ENCODE measurements at regions of chr5 and their contacts with region 1.

Region 1: DNA sequence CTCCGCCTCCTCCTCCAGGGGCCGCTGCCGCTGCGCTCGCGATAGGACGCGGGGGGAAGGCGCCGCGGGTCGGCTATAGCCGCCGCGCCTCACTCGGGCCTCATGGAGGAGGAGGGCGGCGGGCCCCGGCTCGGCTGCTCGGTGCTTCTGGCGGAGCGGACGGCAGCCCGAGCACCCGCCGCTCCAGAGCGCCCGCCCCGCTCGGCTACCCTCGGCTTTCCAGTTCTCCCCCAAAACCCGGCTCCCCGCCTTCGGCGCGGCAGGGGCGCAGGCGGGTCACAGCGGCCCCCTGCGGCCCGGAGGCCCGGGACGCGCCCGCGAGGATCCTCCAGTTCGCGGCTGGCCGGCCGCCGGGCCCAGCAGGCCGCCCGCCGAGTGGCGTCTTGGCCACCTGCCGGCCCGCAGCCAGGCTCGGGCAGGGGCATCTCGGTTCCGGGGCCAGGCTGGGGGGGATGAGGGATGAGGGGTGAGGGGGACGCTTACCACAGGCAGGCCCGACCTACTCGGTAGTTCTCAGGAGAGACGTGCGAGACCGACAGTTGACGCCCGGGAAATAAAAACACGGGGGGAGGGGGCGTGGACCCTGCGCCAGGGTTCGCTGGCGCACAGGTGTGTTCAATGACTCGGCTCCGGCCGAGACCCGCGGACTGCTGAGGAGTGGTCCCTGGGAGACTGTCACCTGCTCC is at the start of gene PAIP1:
- DNase-seq: peak; percentile 83
- ATAC-seq: peak; percentile 87
- H3K4me3 Mint-ChIP-seq: peak within 1 kb of the TSS; percentile 87
- H3K27ac Mint-ChIP-seq: peak within 1 kb of the TSS; percentile 93
- H3K4me1 Mint-ChIP-seq: peaks cover 17% of the 10 kb centered on the region
- H3K27me3 Mint-ChIP-seq: peaks cover 1% of the 10 kb centered on the region
- CTCF ChIP-seq: peak; percentile 69
- total RNA-seq, gene PAIP1: 43.6 to 44.6 TPM

Region 2: GRCh38 chr5:43543434-43543833 is 13.6 kb before region 1 on chr5:
- CTCF ChIA-PET with region 1: interaction called, 16 read pairs
- POLR2A ChIA-PET with region 1: interaction called, 14 read pairs
- intact Hi-C with region 1: no loop called
- DNase-seq: no peak
- ATAC-seq: no peak
- H3K4me3 Mint-ChIP-seq: no peak overlapping the region
- H3K27ac Mint-ChIP-seq: no peak overlapping the region
- H3K4me1 Mint-ChIP-seq: peaks cover 15% of the 10 kb centered on the region
- H3K27me3 Mint-ChIP-seq: no peaks in the 10 kb centered on the region
- CTCF ChIP-seq: no peak

Region 3: DNA sequence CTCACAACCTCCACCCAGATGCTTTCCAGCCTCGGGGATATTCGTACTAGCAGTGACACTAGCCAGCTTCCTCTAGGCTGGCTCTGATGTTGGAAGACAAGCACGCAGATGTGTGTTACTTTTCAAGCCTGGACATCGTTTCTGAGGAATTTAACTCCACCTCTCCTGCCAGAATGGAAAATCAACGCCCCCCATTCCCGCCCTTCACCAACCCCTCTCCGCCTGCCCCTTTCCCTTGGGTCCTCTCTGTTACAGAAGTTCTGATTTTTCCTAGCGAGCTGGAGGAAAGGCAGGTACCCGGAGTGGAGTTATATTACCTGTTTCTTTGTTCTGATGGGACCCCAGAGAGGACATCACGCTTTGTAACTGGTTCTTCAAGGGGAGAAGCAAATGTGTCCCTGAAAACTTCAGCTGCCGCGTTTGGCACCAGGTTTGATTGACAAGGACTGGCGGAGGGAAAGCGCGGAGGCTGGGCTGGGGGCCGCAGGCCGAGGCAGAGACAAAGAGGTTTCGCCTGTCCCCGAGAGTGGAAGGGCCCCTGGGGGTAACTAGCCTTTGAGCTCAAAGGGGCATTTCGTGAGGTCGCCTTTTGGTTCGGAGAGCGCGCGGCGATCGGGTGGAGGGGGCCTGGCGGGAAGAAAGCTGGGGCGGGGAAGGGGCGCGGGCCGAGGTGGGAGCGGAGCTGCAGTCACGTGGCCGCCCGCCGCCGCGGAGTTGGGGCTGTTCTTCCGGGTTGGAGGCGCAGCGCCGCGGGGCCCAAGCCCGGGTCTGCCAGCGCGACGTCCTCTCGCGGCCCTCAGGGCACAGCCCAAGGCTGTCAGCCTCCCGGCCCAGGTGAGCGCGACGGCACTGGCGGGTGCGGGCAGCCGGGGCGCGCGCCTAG is 45.7 kb after region 1 on chr5 and contains the start of gene NNT:
- CTCF ChIA-PET with region 1: interaction called, 6 read pairs
- POLR2A ChIA-PET with region 1: interaction called, 12 read pairs
- intact Hi-C with region 1: loop called (anchors 5 kb)
- DNase-seq: peak; percentile 84
- ATAC-seq: peak; percentile 72
- H3K4me3 Mint-ChIP-seq: peak within 1 kb of the TSS; percentile 86
- H3K27ac Mint-ChIP-seq: peak within 1 kb of the TSS; percentile 87
- H3K4me1 Mint-ChIP-seq: peaks cover 38% of the 10 kb centered on the region
- H3K27me3 Mint-ChIP-seq: no peaks in the 10 kb centered on the region
- CTCF ChIP-seq: no peak
- total RNA-seq, gene NNT: 72.0 to 78.4 TPM